Activated CD4-positive, alpha-beta T cell treated with anti-CD3 and anti-CD28 coated beads for 36 hours (primary cell): ENCODE measurements at regions of chr5 and their contacts with region 1.

Region 1: GRCh38 chr5:140244525-140245025 is 58.3 kb downstream of the PFDN1 start:
- DNase-seq: peak; percentile 93
- ATAC-seq: peak; percentile 71
- H3K4me3 Mint-ChIP-seq: no peak overlapping the region
- H3K27ac Mint-ChIP-seq: no peak overlapping the region
- H3K4me1 Mint-ChIP-seq: peaks cover 27% of the 10 kb centered on the region
- H3K27me3 Mint-ChIP-seq: no peaks in the 10 kb centered on the region

Region 2: GRCh38 chr5:139593716-139594319 is 650.8 kb before region 1 on chr5:
- CTCF ChIA-PET with region 1: no interaction called
- POLR2A ChIA-PET with region 1: no interaction called
- intact Hi-C with region 1: no loop called
- DNase-seq: peak; percentile 28
- ATAC-seq: peak; percentile 62
- H3K4me3 Mint-ChIP-seq: no peak overlapping the region
- H3K27ac Mint-ChIP-seq: no peak overlapping the region
- H3K4me1 Mint-ChIP-seq: peaks cover 41% of the 10 kb centered on the region
- H3K27me3 Mint-ChIP-seq: no peaks in the 10 kb centered on the region

Region 3: DNA sequence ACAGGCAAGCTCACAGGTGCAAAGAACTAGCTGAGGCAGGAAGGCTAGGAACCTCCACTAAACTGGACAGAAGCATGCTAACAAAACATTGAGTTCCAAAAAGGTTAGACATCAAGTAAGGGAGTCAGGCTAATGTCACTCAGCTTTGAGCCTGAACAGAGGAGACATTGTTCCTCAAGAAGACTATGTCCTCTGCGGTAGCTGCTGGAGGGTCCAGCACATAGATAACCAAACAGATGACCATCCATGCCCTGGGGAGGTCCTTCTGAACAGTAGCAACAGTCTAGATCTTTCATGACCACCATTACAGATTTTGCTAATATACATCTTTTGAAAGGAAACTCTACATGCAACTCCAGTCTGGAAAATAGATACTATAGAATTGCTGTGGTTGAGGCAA is 11.8 kb before region 1 on chr5:
- CTCF ChIA-PET with region 1: interaction called, 11 read pairs
- POLR2A ChIA-PET with region 1: no interaction called
- intact Hi-C with region 1: no loop called
- DNase-seq: no peak
- ATAC-seq: no peak
- H3K4me3 Mint-ChIP-seq: no peak overlapping the region
- H3K27ac Mint-ChIP-seq: no peak overlapping the region
- H3K4me1 Mint-ChIP-seq: no peaks in the 10 kb centered on the region
- H3K27me3 Mint-ChIP-seq: no peaks in the 10 kb centered on the region

Region 4: GRCh38 chr5:140302786-140303639 is 58.4 kb after region 1 on chr5 and contains the start of gene PFDN1:
- CTCF ChIA-PET with region 1: interaction called, 13 read pairs
- POLR2A ChIA-PET with region 1: no interaction called
- intact Hi-C with region 1: no loop called
- DNase-seq: peak; percentile 96
- ATAC-seq: peak; percentile 99
- H3K4me3 Mint-ChIP-seq: peak within 1 kb of the TSS; percentile 91
- H3K27ac Mint-ChIP-seq: peak within 1 kb of the TSS; percentile 91
- H3K4me1 Mint-ChIP-seq: peaks cover 29% of the 10 kb centered on the region
- H3K27me3 Mint-ChIP-seq: peaks cover 4% of the 10 kb centered on the region
- total RNA-seq, gene PFDN1: 52.6 to 63.2 TPM

Region 5: DNA sequence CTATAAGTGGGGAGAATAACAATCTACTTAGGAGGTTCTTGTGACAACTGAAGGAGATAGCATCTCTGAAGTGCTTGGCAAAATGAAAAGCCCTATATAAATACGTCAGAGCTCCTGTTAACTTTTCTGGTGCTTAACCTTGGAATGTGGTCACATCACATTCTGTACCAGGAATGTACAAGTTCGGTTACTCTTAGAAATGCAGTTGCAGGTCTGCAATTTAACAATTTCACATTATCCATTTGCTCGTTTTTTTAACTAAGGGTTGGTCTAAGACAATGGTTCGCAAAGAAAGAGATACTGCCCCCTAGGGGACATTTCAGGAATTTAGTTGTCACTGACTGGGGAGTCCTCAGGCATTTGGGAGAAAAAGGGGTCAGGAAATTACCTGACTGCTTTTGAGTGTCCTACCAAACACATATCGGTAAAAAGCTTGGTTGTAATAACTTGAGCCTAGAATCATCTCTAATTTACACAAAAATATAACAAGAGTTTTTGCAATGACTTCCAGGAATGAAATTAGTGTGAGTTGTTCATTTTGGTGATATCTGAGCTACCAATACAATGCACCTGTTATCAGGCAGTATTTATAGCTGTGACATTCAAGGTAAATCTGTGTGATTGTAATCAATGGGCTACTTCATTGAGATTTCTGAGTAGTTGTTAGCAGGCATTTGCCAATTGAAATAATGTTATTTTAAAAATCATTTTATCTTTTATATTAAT is 107.2 kb after region 1 on chr5:
- CTCF ChIA-PET with region 1: interaction called, 616 read pairs
- POLR2A ChIA-PET with region 1: no interaction called
- intact Hi-C with region 1: loop called (anchors 1 kb)
- DNase-seq: peak; percentile 65
- ATAC-seq: peak; percentile 90
- H3K4me3 Mint-ChIP-seq: no peak overlapping the region
- H3K27ac Mint-ChIP-seq: no peak overlapping the region
- H3K4me1 Mint-ChIP-seq: peaks cover 7% of the 10 kb centered on the region
- H3K27me3 Mint-ChIP-seq: no peaks in the 10 kb centered on the region

Region 6: GRCh38 chr5:140362860-140363630 is 118.5 kb after region 1 on chr5:
- CTCF ChIA-PET with region 1: interaction called, 24 read pairs
- POLR2A ChIA-PET with region 1: interaction called, 4 read pairs
- intact Hi-C with region 1: no loop called
- DNase-seq: peak; percentile 93
- ATAC-seq: peak; percentile 95
- H3K4me3 Mint-ChIP-seq: peak overlapping the region; percentile 70
- H3K27ac Mint-ChIP-seq: peak overlapping the region; percentile 61
- H3K4me1 Mint-ChIP-seq: peaks cover 11% of the 10 kb centered on the region
- H3K27me3 Mint-ChIP-seq: peaks cover 5% of the 10 kb centered on the region

Region 7: GRCh38 chr5:140718241-140718580 is 473.6 kb after region 1 on chr5:
- CTCF ChIA-PET with region 1: interaction called, 4 read pairs
- POLR2A ChIA-PET with region 1: no interaction called
- intact Hi-C with region 1: loop called (anchors 2 to 5 kb)
- DNase-seq: no peak
- ATAC-seq: no peak
- H3K4me3 Mint-ChIP-seq: no peak overlapping the region
- H3K27ac Mint-ChIP-seq: no peak overlapping the region
- H3K4me1 Mint-ChIP-seq: peaks cover 4% of the 10 kb centered on the region
- H3K27me3 Mint-ChIP-seq: peaks cover 7% of the 10 kb centered on the region

Region 8: DNA sequence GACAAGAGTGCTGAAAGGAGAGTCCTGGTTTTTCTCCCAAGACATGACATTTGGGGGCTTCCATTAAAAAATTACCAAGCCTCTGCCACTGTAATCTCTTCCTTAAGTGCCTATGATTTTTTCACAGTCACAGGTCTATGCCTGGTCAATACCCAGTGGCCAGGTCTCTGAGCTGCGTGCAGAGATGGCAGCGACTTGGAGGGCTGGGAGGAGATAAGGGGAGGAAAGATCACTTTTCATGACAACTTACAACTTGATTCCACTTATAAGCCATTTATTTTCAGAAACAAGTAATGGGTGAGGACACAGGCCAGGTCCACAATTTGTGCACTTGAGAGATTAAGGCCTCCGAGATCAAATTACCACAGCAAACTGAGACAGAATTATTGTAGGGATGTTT is 719.8 kb after region 1 on chr5:
- CTCF ChIA-PET with region 1: no interaction called
- POLR2A ChIA-PET with region 1: no interaction called
- intact Hi-C with region 1: no loop called
- DNase-seq: no peak
- ATAC-seq: no peak
- H3K4me3 Mint-ChIP-seq: no peak overlapping the region
- H3K27ac Mint-ChIP-seq: no peak overlapping the region
- H3K4me1 Mint-ChIP-seq: no peaks in the 10 kb centered on the region
- H3K27me3 Mint-ChIP-seq: peaks cover 38% of the 10 kb centered on the region